Activated naive CD4-positive, alpha-beta T cell treated with anti-CD3 and anti-CD28 coated beads for 36 hours (primary cell): ENCODE measurements at regions of chr12 and their contacts with region 1.

Region 1: GRCh38 chr12:27821259-27821973 is 41.4 kb upstream of the MANSC4 start:
- DNase-seq: peak; percentile 49
- H3K4me3 Mint-ChIP-seq: no peak overlapping the region
- H3K27ac Mint-ChIP-seq: peak overlapping the region; percentile 88
- H3K4me1 Mint-ChIP-seq: peaks cover 43% of the 10 kb centered on the region
- H3K27me3 Mint-ChIP-seq: peaks cover 30% of the 10 kb centered on the region

Region 2: GRCh38 chr12:27024291-27024690 is 797.1 kb before region 1 on chr12:
- CTCF ChIA-PET with region 1: no interaction called
- intact Hi-C with region 1: loop called (anchors 10 kb)
- DNase-seq: no peak
- H3K4me3 Mint-ChIP-seq: no peak overlapping the region
- H3K27ac Mint-ChIP-seq: no peak overlapping the region
- H3K4me1 Mint-ChIP-seq: peaks cover 30% of the 10 kb centered on the region
- H3K27me3 Mint-ChIP-seq: no peaks in the 10 kb centered on the region

Region 3: GRCh38 chr12:27534060-27534764 is 287.2 kb before region 1 on chr12:
- CTCF ChIA-PET with region 1: no interaction called
- intact Hi-C with region 1: loop called (anchors 1 kb)
- DNase-seq: peak; percentile 71
- H3K4me3 Mint-ChIP-seq: peak overlapping the region; percentile 7
- H3K27ac Mint-ChIP-seq: peak overlapping the region; percentile 71
- H3K4me1 Mint-ChIP-seq: peaks cover 50% of the 10 kb centered on the region
- H3K27me3 Mint-ChIP-seq: no peaks in the 10 kb centered on the region

Region 4: DNA sequence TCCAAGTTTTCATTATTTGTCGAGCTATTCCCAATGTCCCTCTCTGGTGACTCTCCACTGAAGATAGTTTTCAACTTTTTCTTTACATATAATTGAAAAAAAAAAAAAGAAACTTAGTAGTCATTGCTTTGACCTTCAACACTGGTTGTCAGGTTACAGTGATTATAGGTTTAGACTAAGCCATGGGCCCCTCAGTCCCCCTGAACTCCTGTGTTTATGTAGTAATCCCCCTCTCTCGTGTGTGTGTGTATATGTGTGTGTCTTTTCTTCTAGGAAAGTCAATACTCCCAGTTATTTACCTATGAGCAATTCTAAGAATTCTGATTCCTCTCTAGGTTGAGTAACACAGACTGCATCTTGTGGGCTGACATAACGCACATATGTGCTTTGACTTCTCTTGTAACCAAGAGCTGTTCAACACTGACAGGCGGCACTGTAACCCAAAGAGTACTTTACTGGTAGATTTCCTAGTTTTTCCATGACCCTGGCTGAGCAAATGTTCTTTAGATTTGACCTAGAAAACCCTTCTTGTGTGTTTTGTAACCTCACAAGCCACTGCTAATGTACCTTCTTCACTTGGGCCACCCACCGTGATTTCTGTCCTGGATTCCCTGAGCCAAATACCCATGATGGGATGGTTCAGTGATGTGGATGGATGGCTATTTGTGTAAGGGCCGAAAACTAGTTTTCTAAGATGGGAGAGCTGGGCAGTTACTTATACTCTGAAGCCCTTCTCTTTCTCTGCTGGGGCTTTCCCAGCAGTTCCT is 26.4 kb before region 1 on chr12:
- CTCF ChIA-PET with region 1: interaction called, 13 read pairs
- intact Hi-C with region 1: no loop called
- DNase-seq: no peak
- H3K4me3 Mint-ChIP-seq: no peak overlapping the region
- H3K27ac Mint-ChIP-seq: peak overlapping the region; percentile 28
- H3K4me1 Mint-ChIP-seq: peaks cover 14% of the 10 kb centered on the region
- H3K27me3 Mint-ChIP-seq: no peaks in the 10 kb centered on the region

Region 5: DNA sequence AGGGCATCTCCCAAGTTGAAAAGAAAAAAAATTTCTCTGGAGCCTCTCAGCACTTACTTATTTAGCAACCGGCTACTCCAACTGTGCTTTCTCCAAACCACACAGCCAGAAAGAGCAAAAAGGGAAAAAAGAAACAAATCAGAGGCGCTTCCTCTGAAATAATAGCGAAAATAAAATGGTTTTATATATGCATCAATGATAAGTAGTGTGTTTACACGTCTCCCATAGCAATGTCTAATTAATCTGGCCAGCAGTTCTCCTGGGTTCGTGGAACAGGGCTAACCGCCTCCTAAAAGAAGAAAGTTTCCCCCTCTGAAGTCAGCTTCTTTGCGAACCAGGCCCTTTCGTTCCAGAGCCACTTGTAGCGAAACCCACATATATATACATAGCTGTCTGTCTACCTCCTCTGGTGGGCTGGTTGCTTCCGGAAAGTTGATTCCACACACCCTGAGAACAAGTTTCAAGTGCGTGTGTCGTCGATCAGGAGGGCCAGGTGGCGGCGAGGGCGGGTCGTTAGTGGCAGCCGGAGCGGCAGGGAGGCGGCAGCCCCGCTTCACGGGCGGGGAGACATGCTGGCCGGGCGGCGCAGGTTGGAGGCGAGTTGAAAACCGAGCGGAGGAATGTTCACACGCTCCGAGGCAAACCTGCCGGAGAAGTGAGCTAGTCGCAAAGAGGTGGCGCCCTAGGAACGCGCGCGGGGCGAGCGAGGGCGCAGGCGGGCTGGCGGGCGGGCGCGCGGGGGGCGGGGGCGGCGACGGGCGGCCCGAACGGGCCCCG is 148.4 kb after region 1 on chr12:
- CTCF ChIA-PET with region 1: no interaction called
- intact Hi-C with region 1: loop called (anchors 1 kb)
- DNase-seq: peak; percentile 71
- H3K4me3 Mint-ChIP-seq: peak overlapping the region; percentile 82
- H3K27ac Mint-ChIP-seq: no peak overlapping the region
- H3K4me1 Mint-ChIP-seq: peaks cover 30% of the 10 kb centered on the region
- H3K27me3 Mint-ChIP-seq: peaks cover 77% of the 10 kb centered on the region

Region 6: DNA sequence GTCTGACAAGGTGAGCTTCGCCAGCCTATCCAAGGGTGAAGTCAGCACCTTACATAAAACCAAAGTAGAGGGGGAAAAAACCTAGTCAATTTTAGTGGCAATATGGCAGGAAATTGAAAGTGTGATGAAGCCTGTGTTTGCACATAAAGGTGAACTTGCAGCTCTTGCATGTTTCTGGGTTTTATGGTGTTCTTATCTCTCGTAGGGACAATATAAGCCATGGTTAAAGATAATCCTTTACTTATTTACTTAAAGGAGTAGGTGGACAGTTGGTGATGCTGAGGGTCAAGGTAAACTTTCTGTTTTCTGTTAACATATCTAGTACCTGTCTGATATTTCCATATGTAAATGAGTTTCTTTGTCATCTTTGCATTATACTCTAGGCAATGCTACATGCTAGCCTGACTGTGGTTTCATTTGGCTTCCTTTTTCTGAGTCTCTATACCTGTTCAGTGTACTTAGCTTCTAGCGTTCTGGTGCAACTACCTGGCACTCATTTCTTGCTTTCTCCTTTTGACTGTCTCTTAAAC is 401.7 kb after region 1 on chr12:
- CTCF ChIA-PET with region 1: no interaction called
- intact Hi-C with region 1: loop called (anchors 1 kb)
- DNase-seq: peak; percentile 52
- H3K4me3 Mint-ChIP-seq: peak overlapping the region; percentile 48
- H3K27ac Mint-ChIP-seq: peak overlapping the region; percentile 87
- H3K4me1 Mint-ChIP-seq: peaks cover 56% of the 10 kb centered on the region
- H3K27me3 Mint-ChIP-seq: no peaks in the 10 kb centered on the region

Region 7: DNA sequence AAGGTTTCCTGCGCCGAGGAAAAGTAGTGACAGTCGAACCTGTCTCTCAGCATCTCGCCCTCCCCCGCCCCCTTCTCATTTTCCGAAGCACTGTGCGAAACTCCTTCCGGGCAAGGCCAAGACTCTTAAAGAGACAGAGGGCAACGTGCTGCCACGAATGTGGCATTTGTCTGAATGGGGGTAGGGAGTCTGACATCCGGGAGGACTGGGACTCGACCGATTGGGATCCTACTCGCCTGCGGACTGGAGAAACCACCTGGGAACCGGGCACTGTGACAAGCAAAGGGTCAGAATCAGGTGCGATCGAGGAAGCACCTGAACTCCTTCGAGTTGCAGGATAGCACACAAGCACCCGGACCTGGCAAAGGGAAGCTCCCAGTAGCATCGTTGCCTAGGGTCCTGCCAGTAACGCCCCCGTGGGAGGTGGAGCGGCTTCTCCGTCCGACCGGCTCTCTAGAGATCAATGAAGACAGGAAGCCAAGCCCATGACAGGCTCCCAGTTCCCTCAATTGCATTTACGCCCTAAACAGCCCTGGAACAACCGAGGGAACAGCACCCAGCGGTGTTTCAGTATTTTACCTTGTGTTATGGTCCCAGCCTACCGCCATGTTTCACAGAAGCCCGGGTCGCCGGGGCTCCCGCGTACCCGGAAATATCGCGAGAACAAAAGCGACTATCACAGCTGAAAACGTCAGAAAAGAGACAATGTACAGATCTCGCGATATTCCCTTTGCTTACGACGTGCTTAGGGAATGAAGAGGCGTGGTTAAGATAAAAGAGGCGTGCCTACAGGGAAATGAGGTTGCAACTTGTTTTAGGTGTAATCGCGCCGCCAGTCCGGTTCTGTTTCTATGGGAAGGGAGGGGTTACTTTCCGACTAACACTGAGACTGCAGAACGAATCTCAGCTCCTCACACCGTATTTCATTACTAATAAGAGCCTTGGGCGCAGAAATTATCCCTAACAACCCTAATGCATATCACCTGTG is 1559.4 kb after region 1 on chr12 and contains the start of gene ERGIC2:
- CTCF ChIA-PET with region 1: no interaction called
- intact Hi-C with region 1: loop called (anchors 2 kb)
- DNase-seq: peak; percentile 95
- H3K4me3 Mint-ChIP-seq: peak within 1 kb of the TSS; percentile 95
- H3K27ac Mint-ChIP-seq: peak within 1 kb of the TSS; percentile 96
- H3K4me1 Mint-ChIP-seq: peaks cover 47% of the 10 kb centered on the region
- H3K27me3 Mint-ChIP-seq: no peaks in the 10 kb centered on the region
- total RNA-seq, gene ERGIC2: 112 to 116 TPM